Astrocyte of the cerebellum (primary cell): ENCODE measurements at regions of chr17 and their contacts with region 1.

Region 1: DNA sequence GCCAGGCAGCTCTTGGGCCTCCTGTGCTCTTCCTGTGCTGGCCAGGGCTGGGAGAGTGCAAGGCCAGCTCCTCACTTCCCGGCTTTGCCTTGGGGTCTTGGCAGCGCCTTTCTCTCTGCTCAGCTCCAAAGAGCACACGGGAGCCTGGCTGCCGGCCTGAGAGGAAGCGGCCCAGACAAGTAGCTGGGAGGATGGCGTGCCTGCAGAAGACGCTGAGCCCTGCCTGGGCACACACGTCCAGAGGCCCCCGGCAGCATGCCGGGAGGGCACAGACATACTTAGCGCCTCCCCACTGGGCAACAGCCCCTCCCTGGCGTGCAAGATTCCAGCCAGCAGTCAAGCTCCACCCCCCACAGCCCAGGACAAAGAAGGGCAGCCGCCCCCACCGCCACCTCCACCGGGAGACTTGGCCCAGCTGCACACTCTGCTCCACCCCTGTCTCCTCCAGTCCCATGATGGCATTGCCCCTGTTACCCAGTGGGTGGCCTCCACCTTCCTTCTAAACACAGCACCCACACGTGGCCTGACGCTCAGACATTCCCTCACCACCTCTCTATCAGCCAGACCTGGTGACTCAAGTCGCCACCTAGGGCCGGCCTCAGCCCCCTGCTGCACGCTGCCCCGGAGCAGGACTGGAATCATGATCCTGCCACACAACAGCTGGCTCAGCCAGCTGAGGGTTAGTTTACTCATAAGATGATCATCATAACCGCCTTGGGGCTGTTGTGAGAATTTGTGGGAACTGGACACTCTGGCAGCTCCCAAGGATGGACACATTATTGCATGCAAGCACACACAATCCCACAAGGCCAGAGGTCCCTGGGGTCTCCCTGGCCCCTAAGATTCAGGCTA is 12.4 kb downstream of the SGCA start:
- DNase-seq: peak; percentile 84
- H3K4me3 ChIP-seq: no peak overlapping the region
- CTCF ChIP-seq: peak; percentile 54

Region 2: GRCh38 chr17:50129728-50130558 is 48.3 kb before region 1 on chr17 and contains the start of gene SAMD14:
- in situ Hi-C with region 1: no loop called
- DNase-seq: no peak
- H3K4me3 ChIP-seq: peak within 1 kb of the TSS; percentile 62
- CTCF ChIP-seq: no peak

Region 3: GRCh38 chr17:50297407-50297865 is 119.2 kb after region 1 on chr17:
- in situ Hi-C with region 1: loop called (anchors 10 kb)
- DNase-seq: peak; percentile 42
- H3K4me3 ChIP-seq: no peak overlapping the region
- CTCF ChIP-seq: peak; percentile 75